ENCODE measurements at regions of chr11 and their contacts with region 1.

Region 1: GRCh38 chr11:76860539-76861475 is at the start of gene ACER3:
- DNase-seq: peak; percentile 87
- H3K4me3 Mint-ChIP-seq: peak within 1 kb of the TSS; percentile 90
- H3K27ac Mint-ChIP-seq: peak within 1 kb of the TSS; percentile 73
- H3K4me1 Mint-ChIP-seq: peaks cover 33% of the 10 kb centered on the region
- H3K27me3 Mint-ChIP-seq: peaks cover 2% of the 10 kb centered on the region
- total RNA-seq, gene ACER3: 9.9 and 12.2 TPM in 2 replicates

Region 2: GRCh38 chr11:76872959-76873827 is 12.4 kb after region 1 on chr11:
- intact Hi-C with region 1: no loop called
- DNase-seq: no peak
- H3K4me3 Mint-ChIP-seq: no peak overlapping the region
- H3K27ac Mint-ChIP-seq: no peak overlapping the region
- H3K4me1 Mint-ChIP-seq: no peaks in the 10 kb centered on the region
- H3K27me3 Mint-ChIP-seq: no peaks in the 10 kb centered on the region

Region 3: GRCh38 chr11:77009533-77010160 is 148.8 kb after region 1 on chr11:
- intact Hi-C with region 1: loop called (anchors 5 kb)
- DNase-seq: no peak
- H3K4me3 Mint-ChIP-seq: no peak overlapping the region
- H3K27ac Mint-ChIP-seq: no peak overlapping the region
- H3K4me1 Mint-ChIP-seq: no peaks in the 10 kb centered on the region
- H3K27me3 Mint-ChIP-seq: peaks cover 1% of the 10 kb centered on the region

Measured in activated T-helper 1 cell treated with anti-CD3 and anti-CD28 coated beads, Interleukin-12 subunit alpha, Interleukin-12 subunit beta, Interleukin-2, Interleukin-4 antibody, amounts not matched to agents 30 ng/mL and 10 ng/mL and 1 ng/mL, durations not matched to agents 14 hours and 24 hours and 36 hours (primary cell).